Thyroid gland (tissue), 4 donors: ENCODE measurements at regions of chr4 and their contacts with region 1.

Region 1: GRCh38 chr4:115090483-115091075 is 22.8 kb downstream of the NDST4 start:
- DNase-seq: no peak
- H3K4me3 ChIP-seq: no peak overlapping the region
- H3K27ac ChIP-seq: no peak overlapping the region
- H3K4me1 ChIP-seq: no peaks in the 10 kb centered on the region
- H3K27me3 ChIP-seq: no peaks in the 10 kb centered on the region
- CTCF ChIP-seq: peak in 4 of 6 experiments; percentile 11 to 68 (median 46)
- POLR2A ChIP-seq: no peak

Region 2: GRCh38 chr4:115537387-115537786 is 446.8 kb after region 1 on chr4:
- intact Hi-C with region 1: loop called (anchors 10 kb)
- DNase-seq: no peak
- H3K4me3 ChIP-seq: no peak overlapping the region
- H3K27ac ChIP-seq: no peak overlapping the region
- H3K4me1 ChIP-seq: no peaks in the 10 kb centered on the region
- H3K27me3 ChIP-seq: no peaks in the 10 kb centered on the region
- CTCF ChIP-seq: peak in 3 of 6 experiments; percentile 32 to 41 (median 38)
- POLR2A ChIP-seq: no peak